ENCODE measurements at regions of chr3 and their contacts with region 1.

Region 1: GRCh38 chr3:65439641-65440284 is 599.0 kb downstream of the MAGI1 start:
- DNase-seq: peak; percentile 61
- ATAC-seq: peak; percentile 90

Region 2: DNA sequence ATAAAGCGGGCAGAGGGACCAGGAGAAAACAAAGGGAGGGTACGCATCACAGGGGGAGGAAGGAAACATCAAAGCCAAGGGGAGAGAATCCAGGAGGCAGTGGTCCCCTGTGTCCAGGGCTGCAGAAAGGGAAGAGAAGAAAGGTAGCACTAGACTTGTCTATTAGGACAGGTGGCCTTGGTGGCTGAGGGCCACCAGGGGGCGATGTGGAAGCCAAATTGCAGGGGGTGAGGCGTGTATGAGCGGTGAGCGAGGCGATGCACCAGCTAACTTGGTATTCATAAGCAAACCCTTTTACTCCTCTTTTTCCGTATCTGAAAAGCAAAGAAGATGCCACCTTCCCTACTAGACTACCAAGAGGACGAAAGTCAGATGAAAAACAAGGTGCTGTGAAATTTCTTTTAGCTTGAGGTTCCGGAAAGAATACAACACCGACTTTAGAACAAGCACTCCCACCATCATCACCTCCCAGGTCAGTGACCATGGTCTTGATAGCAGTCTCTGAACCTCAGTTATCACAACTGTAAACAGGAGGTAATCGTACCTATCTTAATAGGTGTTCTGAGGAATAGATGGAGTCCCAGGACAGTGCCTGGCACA is 97.6 kb before region 1 on chr3:
- intact Hi-C with region 1: no loop called
- DNase-seq: peak; percentile 72
- ATAC-seq: peak; percentile 69

Region 3: GRCh38 chr3:65672871-65673815 is 233.4 kb after region 1 on chr3:
- intact Hi-C with region 1: loop called (anchors 10 kb)
- DNase-seq: peak; percentile 81
- ATAC-seq: peak; percentile 63

Region 4: GRCh38 chr3:65732051-65732935 is 292.5 kb after region 1 on chr3:
- intact Hi-C with region 1: loop called (anchors 10 kb)
- DNase-seq: no peak
- ATAC-seq: peak; percentile 65